Posterior vena cava (tissue), 2 donors: ENCODE measurements at regions of chr12 and their contacts with region 1.

Region 1: DNA sequence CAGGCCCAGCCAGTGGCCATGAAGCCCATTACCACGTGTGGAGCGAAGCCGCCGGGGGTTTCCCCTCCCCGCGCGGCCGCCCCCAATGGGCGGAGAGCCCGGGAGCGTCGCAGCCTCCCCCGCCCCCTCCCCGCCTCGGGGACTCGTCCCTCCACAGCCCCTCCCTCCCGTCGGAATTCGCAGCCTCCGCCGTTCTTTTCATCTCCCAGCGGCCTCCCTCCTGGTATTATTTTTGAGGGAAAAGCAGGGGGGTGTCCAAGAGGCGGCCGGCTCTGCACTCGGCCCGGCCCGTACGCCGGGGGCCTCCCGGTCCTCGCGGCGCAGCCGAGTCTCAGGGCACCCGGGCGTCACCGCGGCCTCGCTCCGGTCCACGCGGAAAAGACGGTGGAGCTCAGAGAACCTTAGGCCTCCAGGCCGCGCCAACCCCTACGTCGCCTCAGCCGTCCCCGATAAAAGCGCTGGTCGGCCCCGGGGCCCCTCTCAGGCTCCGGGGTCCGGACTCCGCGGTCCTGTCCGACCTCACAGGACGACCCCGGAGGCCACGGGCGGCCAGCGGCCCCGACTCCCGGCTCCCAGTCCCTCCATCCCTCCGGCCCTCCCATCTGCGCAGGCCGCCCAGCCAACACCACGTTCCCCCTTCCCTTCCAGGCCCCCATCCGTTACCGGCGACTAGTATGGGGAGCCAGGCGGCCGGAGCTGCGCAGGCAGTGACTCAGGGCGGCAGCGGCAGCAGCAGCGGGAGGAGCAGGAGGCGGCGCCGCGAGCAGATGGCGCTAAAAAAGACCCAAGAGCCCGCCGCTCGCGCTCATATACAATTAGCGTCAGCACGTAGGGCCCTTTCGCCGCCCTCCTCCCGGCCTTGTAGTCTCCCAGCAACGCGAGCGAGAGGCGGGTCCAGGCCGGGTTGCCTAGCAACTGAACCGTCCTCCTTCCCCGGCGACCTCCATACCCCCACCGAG is at the start of gene NAP1L1:
- DNase-seq: peak; percentile 99
- total RNA-seq, gene NAP1L1: 281 to 331 TPM

Region 2: GRCh38 chr12:76108356-76108755 is 24.2 kb after region 1 on chr12:
- intact Hi-C with region 1: loop called in 1 of 2 experiments (anchors 1 kb)
- DNase-seq: no peak

Region 3: DNA sequence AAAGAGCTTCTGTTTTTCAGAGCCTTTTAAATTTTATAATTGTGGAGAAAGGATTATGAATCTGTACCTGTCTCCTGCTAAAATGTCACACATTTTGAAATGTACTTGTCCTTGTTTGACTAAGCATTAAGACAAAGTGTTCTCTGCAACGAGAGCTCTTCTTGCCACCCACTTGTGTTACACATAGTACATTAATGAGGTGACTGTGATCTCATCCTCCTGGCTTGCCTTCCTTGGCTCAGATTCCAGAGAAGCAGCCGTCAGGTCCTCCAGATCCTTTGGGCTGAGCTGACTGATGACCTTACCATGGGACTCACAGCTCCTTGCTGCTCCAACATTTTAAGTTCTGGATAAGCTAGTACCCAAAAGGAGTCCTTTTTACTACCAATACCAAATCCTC is 182.6 kb after region 1 on chr12:
- intact Hi-C with region 1: no loop called
- DNase-seq: no peak